ENCODE measurements at regions of chr4 and their contacts with region 1.

Region 1: GRCh38 chr4:140359562-140360427 is 13.7 kb upstream of the SCOC start:
- DNase-seq: peak; percentile 81
- H3K4me3 Mint-ChIP-seq: no peak overlapping the region
- H3K27ac Mint-ChIP-seq: no peak overlapping the region
- H3K4me1 Mint-ChIP-seq: no peaks in the 10 kb centered on the region
- H3K27me3 Mint-ChIP-seq: peaks cover 3% of the 10 kb centered on the region

Region 2: DNA sequence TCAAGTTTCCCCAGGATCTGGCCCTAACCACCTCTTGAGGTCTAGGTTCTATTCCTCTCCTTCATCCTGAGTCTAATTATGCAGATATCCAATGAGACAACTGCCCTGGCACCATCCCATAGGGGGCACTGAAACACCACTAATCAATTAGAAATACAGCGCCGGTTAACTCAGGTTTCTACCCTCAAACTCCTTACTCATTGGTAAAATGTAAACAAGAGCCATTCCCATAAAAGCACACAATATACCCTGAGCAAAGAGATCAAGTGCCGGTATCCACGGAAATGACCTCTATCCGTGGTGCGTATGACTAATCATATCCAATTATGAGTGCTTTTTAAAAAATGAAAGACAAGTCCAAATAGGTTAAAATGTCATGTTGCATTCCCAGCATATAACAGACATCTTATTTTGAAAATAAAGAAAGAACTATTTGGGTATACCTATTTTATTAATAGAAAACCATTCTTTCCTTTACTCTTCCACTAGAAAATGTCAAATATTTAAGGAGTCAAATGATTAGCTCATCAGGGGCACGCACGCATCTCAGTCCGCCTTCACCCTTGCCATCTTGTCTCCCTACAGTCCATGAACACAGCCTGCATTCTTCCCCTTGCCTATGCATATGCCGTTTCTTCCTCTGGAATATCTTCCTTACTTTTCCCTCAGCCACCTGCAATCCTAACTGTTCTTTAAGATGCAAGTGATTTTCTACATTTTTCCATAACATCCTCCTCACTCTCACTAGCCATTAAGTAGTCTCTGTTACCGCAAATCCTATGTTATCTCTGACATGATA is 346.9 kb before region 1 on chr4:
- CTCF ChIA-PET with region 1: interaction called, 25 read pairs
- POLR2A ChIA-PET with region 1: no interaction called
- intact Hi-C with region 1: loop called (anchors 1 kb)
- DNase-seq: peak; percentile 62
- H3K4me3 Mint-ChIP-seq: no peak overlapping the region
- H3K27ac Mint-ChIP-seq: no peak overlapping the region
- H3K4me1 Mint-ChIP-seq: no peaks in the 10 kb centered on the region
- H3K27me3 Mint-ChIP-seq: peaks cover 11% of the 10 kb centered on the region

Region 3: GRCh38 chr4:140603278-140603677 is 243.5 kb after region 1 on chr4:
- CTCF ChIA-PET with region 1: interaction called, 27 read pairs
- POLR2A ChIA-PET with region 1: no interaction called
- intact Hi-C with region 1: no loop called
- DNase-seq: no peak
- H3K4me3 Mint-ChIP-seq: no peak overlapping the region
- H3K27ac Mint-ChIP-seq: no peak overlapping the region
- H3K4me1 Mint-ChIP-seq: no peaks in the 10 kb centered on the region
- H3K27me3 Mint-ChIP-seq: peaks cover 10% of the 10 kb centered on the region

Region 4: GRCh38 chr4:140609548-140610425 is 250.0 kb after region 1 on chr4:
- CTCF ChIA-PET with region 1: interaction called, 27 read pairs
- POLR2A ChIA-PET with region 1: no interaction called
- intact Hi-C with region 1: loop called (anchors 1 kb)
- DNase-seq: no peak
- H3K4me3 Mint-ChIP-seq: no peak overlapping the region
- H3K27ac Mint-ChIP-seq: no peak overlapping the region
- H3K4me1 Mint-ChIP-seq: no peaks in the 10 kb centered on the region
- H3K27me3 Mint-ChIP-seq: peaks cover 8% of the 10 kb centered on the region

Region 5: GRCh38 chr4:140637836-140638235 is 278.0 kb after region 1 on chr4:
- CTCF ChIA-PET with region 1: interaction called, 14 read pairs
- POLR2A ChIA-PET with region 1: no interaction called
- intact Hi-C with region 1: loop called (anchors 1 kb)
- DNase-seq: peak; percentile 51
- H3K4me3 Mint-ChIP-seq: no peak overlapping the region
- H3K27ac Mint-ChIP-seq: no peak overlapping the region
- H3K4me1 Mint-ChIP-seq: no peaks in the 10 kb centered on the region
- H3K27me3 Mint-ChIP-seq: peaks cover 9% of the 10 kb centered on the region

Region 6: DNA sequence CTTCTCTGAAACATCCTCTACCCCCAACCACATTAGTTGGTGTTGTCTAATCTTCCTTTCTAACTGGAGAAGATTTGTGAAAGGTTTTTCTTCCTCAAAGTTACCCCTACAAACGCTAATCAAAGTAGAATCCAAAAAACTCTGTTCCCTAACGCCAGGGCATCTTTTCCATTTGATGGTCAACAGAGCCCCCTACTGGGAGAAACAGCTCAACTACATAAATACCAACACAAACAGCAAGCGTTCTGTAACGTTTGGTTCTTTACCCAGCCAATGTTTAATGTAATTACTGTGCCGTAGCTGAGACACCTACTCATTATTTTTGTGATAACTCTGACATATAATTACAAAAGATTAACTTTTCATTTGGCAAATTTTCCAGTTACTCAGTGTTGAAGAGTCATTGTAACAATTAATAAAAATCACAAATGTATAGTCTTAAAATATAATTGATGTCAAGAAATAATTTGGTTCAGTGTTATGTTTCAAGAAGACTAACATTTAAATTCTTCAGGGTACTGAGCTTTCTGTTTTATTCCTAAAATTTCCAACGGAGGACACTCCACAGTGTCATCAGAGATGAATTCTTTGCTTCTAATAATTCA is 491.3 kb after region 1 on chr4:
- CTCF ChIA-PET with region 1: interaction called, 7 read pairs
- POLR2A ChIA-PET with region 1: no interaction called
- intact Hi-C with region 1: loop called (anchors 2 kb)
- DNase-seq: peak; percentile 16
- H3K4me3 Mint-ChIP-seq: no peak overlapping the region
- H3K27ac Mint-ChIP-seq: no peak overlapping the region
- H3K4me1 Mint-ChIP-seq: no peaks in the 10 kb centered on the region
- H3K27me3 Mint-ChIP-seq: peaks cover 25% of the 10 kb centered on the region

Region 7: GRCh38 chr4:142160509-142160908 is 1800.7 kb after region 1 on chr4:
- CTCF ChIA-PET with region 1: no interaction called
- POLR2A ChIA-PET with region 1: no interaction called
- intact Hi-C with region 1: no loop called
- DNase-seq: no peak
- H3K4me3 Mint-ChIP-seq: no peak overlapping the region
- H3K27ac Mint-ChIP-seq: no peak overlapping the region
- H3K4me1 Mint-ChIP-seq: peaks cover 43% of the 10 kb centered on the region
- H3K27me3 Mint-ChIP-seq: no peaks in the 10 kb centered on the region